AG04449 (cell line): ENCODE measurements at regions of chr10 and their contacts with region 1.

Region 1: DNA sequence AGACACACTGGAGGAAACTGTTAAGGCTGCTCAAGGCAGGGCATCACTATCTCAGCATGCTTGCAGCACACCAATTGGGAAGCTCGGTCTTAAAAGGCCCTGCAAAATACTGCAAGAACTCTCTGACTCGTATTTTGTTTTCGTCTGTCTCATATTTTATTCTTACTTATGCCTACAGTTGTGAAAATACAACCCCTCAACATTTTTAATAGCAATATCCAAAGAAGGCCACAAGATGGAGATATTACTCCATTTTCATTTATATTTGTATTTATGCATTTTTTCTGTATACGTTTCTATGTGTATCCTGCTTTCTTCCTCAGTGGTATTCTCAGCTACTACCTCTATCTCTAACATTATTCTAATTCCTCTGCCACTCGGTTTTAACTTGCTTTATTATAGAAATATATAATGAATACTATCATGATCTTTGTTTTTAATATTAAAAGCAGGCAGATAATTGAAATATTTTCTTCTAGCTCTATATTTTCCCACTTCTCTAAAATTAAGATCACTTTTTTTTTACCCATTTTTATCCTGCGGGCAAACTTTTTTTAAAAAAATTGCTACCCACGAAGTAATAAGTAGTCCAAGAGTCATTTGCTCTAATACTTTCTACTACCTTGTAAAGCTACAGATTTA is 10.0 kb downstream of the DNAJC1 start:
- DNase-seq: no peak
- H3K4me3 ChIP-seq: no peak overlapping the region
- CTCF ChIP-seq: no peak

Region 2: GRCh38 chr10:21912625-21913024 is 80.9 kb before region 1 on chr10:
- CTCF ChIA-PET with region 1: no interaction called
- POLR2A ChIA-PET with region 1: no interaction called
- DNase-seq: no peak
- H3K4me3 ChIP-seq: no peak overlapping the region
- CTCF ChIP-seq: no peak

Region 3: GRCh38 chr10:21980691-21981090 is 12.8 kb before region 1 on chr10:
- CTCF ChIA-PET with region 1: interaction called, 10 read pairs
- POLR2A ChIA-PET with region 1: no interaction called
- DNase-seq: no peak
- H3K4me3 ChIP-seq: no peak overlapping the region
- CTCF ChIP-seq: no peak